A673 (cell line): ENCODE measurements at regions of chr17 and their contacts with region 1.

Region 1: GRCh38 chr17:13337864-13338371 is 263.8 kb downstream of the HS3ST3A1 start:
- DNase-seq: peak; percentile 55
- H3K4me3 ChIP-seq: no peak overlapping the region
- H3K27ac ChIP-seq: no peak overlapping the region
- H3K4me1 ChIP-seq: no peaks in the 10 kb centered on the region
- H3K27me3 ChIP-seq: peaks cover 3% of the 10 kb centered on the region
- CTCF ChIP-seq: peak; percentile 78

Region 2: GRCh38 chr17:13244513-13244912 is 93.4 kb before region 1 on chr17:
- CTCF ChIA-PET with region 1: no interaction called
- POLR2A ChIA-PET with region 1: no interaction called
- intact Hi-C with region 1: no loop called
- DNase-seq: no peak
- H3K4me3 ChIP-seq: no peak overlapping the region
- H3K27ac ChIP-seq: no peak overlapping the region
- H3K4me1 ChIP-seq: no peaks in the 10 kb centered on the region
- H3K27me3 ChIP-seq: no peaks in the 10 kb centered on the region
- CTCF ChIP-seq: no peak

Region 3: DNA sequence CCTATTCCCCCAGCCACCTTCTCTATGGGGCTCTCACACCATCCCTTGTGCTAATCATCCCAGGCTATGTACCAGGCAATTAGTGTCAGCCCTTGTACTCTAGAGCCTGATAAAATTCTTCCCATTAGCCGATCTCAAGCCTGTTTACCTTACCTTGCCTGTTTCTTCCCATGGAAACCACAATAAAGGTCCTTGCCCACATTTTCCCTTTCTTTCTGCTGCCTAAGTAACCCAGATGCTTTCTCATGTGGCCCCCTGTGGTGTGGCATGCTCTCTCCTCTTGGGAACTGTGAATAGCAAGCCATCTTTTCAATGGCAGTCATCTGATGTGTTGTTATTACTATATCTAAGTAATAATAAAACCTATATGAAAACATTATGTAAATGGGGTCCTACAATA is 54.3 kb before region 1 on chr17:
- CTCF ChIA-PET with region 1: no interaction called
- POLR2A ChIA-PET with region 1: no interaction called
- intact Hi-C with region 1: no loop called
- DNase-seq: no peak
- H3K4me3 ChIP-seq: no peak overlapping the region
- H3K27ac ChIP-seq: no peak overlapping the region
- H3K4me1 ChIP-seq: no peaks in the 10 kb centered on the region
- H3K27me3 ChIP-seq: no peaks in the 10 kb centered on the region
- CTCF ChIP-seq: no peak

Region 4: DNA sequence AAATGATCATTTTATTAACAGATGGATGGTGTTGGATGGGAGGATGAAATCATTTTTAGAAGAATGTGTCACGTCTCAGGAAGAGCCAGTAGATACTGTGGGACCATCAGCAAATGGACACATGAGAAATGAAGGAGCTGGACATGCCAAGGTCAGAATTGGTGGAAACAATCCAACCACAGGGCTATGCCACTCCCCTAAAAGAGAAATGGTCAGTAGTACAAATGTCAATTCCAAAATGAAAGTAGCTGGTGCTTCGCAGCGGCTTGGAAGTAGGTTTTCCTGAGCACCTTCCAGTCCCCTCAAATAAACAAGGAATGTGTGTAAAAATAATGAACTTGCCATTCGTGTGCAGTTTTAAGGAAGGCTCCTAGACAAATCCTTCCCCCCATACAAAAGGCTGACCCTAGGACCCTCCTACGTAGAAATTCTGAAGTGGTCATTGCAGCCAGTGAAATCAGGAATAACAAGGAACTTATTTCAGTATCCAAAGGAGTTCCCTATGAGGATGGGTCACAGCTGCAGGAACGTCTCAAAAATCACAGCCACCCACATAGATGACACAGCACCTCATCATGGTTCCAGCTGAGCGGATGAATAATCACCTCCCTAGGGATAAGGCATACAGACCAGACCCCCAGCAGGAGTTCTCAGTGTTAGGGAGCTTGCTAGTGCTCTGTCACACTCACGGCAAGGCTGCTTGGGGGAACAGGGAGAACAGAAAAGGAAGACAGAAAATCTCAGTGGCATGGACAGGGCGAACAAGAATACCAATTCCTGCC is 24.6 kb after region 1 on chr17:
- CTCF ChIA-PET with region 1: no interaction called
- POLR2A ChIA-PET with region 1: no interaction called
- intact Hi-C with region 1: no loop called
- DNase-seq: no peak
- H3K4me3 ChIP-seq: no peak overlapping the region
- H3K27ac ChIP-seq: no peak overlapping the region
- H3K4me1 ChIP-seq: no peaks in the 10 kb centered on the region
- H3K27me3 ChIP-seq: no peaks in the 10 kb centered on the region
- CTCF ChIP-seq: no peak

Region 5: GRCh38 chr17:14926526-14927122 is 1588.7 kb after region 1 on chr17:
- CTCF ChIA-PET with region 1: no interaction called
- POLR2A ChIA-PET with region 1: no interaction called
- intact Hi-C with region 1: loop called (anchors 5 kb)
- DNase-seq: peak; percentile 58
- H3K4me3 ChIP-seq: no peak overlapping the region
- H3K27ac ChIP-seq: no peak overlapping the region
- H3K4me1 ChIP-seq: no peaks in the 10 kb centered on the region
- H3K27me3 ChIP-seq: no peaks in the 10 kb centered on the region
- CTCF ChIP-seq: peak; percentile 84